PC-9 (cell line): ENCODE measurements at regions of chr7 and their contacts with region 1.

Region 1: GRCh38 chr7:953547-954327 is 743 bp downstream of the ADAP1 start:
- DNase-seq: peak; percentile 57 to 83
- H3K4me3 ChIP-seq: peak overlapping the region; percentile 92
- H3K27ac ChIP-seq: no peak overlapping the region
- H3K4me1 ChIP-seq: peaks cover 37% of the 10 kb centered on the region
- H3K27me3 ChIP-seq: no peaks in the 10 kb centered on the region
- CTCF ChIP-seq: no peak

Region 2: DNA sequence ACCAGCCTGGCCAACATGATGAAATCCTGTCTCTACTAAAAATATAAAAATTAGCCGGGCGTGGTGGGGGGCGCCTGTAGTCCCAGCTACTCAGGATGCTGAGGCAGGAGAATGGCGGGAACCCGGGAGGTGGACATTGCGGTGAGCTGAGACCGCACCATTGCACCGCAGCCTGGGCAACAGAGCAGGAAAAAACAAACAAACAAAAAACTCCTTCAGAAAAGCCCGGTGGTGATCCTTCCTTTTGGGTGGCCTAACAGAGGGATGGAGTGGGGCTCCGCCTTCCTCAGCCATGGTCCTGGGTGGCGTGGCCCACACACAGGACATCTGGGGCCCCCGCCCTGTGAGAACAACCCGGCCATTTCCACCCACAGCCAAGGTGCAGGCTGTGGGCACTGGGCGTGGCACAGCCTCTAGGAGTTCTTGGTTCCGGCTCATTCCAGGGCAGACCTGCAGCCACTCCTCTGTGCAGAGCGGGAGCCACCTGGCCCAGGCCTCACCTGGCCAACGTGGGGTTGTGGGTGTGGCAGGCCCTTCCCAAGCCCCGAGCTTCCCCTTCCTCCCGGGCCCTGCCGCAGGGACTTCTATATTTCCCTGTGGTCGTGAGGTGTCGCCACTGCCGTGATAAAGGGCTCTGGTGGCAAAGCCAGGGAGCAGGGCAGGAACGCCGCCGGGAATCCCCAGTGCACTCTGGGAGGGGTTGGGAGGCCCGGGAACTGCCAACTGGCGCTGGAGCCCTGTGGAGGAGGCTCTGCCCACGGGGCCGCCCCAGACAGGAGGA is 39.8 kb before region 1 on chr7:
- CTCF ChIA-PET with region 1: no interaction called
- POLR2A ChIA-PET with region 1: no interaction called
- intact Hi-C with region 1: loop called (anchors 1 kb)
- DNase-seq: peak; percentile 65 to 98
- H3K4me3 ChIP-seq: no peak overlapping the region
- H3K27ac ChIP-seq: no peak overlapping the region
- H3K4me1 ChIP-seq: peaks cover 12% of the 10 kb centered on the region
- H3K27me3 ChIP-seq: no peaks in the 10 kb centered on the region
- CTCF ChIP-seq: no peak; the same call in 1 of the 2 replicates

Region 3: GRCh38 chr7:936131-937054 is 17.3 kb before region 1 on chr7:
- CTCF ChIA-PET with region 1: no interaction called
- POLR2A ChIA-PET with region 1: interaction called, 16 read pairs
- intact Hi-C with region 1: loop called (anchors 1 kb)
- DNase-seq: peak; percentile 95 to 96
- H3K4me3 ChIP-seq: peak overlapping the region; percentile 45; the same call in 1 of the 2 replicates
- H3K27ac ChIP-seq: peak overlapping the region; percentile 89
- H3K4me1 ChIP-seq: peaks cover 13% of the 10 kb centered on the region
- H3K27me3 ChIP-seq: no peaks in the 10 kb centered on the region
- CTCF ChIP-seq: no peak

Region 4: DNA sequence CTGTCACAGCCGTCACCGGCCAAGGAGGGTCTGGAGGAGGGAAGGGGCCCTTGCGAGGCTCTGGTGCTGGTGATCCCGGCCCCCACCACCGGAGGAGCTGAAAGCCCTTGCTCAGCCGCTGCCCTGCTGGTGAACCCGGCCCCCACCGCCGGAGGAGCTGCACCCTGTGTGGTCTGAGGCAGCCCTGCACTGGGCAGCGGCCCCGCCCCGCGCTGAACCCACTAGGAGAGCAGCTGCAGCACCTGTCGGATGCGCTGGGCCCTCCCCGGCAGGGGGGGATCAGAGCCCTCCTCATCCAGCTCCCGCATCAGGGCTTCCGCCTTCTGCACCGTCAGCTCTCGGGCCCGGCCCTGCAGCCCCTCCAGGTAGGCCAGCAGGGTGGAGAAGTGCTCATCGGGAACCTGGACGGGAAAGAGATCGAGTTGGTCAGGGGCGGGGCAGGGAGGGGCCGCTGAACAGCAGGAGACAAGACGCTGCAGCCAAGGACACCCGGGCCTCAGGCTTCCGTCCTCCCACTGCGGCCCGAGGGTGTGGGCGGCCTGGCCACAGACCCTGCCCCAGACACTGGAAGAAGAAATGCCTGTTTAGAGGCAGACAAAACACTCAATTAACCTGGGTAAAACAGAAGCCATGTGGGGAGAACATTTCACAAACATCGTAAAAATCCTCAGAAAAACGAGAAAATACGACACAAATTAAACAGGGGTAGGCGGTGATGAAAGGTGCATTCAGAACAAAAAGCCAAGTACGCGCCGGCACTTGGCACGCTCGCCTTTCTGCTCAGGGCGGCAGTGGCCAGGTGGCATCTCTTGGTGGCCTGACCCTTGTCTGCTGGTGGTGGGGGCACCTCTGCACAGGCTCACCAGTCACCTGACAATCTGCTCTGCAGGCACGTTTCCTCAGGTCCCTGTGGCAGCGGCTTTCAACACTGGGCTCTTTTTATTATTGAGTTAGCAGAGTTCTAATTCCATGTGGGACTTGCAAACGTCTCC is 44.0 kb after region 1 on chr7:
- CTCF ChIA-PET with region 1: no interaction called
- POLR2A ChIA-PET with region 1: no interaction called
- intact Hi-C with region 1: no loop called
- DNase-seq: no peak
- H3K4me3 ChIP-seq: no peak overlapping the region
- H3K27ac ChIP-seq: no peak overlapping the region
- H3K4me1 ChIP-seq: no peaks in the 10 kb centered on the region
- H3K27me3 ChIP-seq: no peaks in the 10 kb centered on the region
- CTCF ChIP-seq: no peak